ENCODE measurements at regions of chr1 and their contacts with region 1.

Region 1: DNA sequence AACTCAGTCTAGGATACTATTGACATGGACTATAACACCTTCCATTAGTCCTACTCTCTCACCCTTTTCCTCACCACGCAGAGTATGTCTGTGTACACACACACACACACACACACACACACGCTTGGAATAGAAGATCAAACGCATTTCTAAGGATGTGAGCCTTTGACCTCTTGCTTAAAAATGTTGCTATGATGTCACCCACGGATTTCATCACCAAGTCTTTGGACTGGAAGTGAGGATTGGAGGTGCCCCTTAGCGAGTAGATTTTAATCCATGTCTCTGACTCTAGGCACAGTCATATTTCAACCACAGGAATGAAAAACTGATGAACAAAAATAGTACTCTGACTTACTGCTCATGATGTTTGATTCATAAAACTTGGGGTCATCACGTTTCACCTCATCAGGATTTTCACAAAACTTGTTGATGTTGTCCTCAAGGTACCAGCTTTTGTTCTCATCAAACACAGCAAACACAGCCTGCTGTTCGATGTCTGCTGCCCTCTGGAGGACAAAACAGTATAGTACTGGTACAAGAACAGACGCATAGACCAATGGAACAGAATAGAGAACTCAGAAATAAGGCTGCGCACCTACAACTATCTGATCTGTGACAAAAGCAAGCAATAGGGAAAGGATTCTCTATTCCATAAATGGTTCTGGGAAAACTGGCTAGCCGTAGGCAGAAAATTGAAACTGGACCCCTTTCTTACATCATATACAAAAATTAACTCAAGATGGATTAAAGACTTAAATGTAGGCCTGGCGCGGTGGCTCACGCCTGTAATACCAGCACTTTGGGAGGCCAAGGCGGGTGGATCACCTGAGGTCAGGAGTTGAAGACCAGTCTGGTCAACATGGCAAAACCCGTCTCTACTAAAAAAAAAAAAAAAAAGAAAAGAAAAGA is 39.9 kb downstream of the F5 start:
- DNase-seq: peak; percentile 34 to 38
- ATAC-seq: peak; percentile 84 to 94
- H3K4me3 ChIP-seq: no peak overlapping the region
- H3K27ac ChIP-seq: no peak overlapping the region
- H3K4me1 ChIP-seq: no peaks in the 10 kb centered on the region
- H3K27me3 ChIP-seq: no peaks in the 10 kb centered on the region
- CTCF ChIP-seq: peak; percentile 77 to 85 (median 80)
- POLR2A ChIP-seq: no peak

Region 2: GRCh38 chr1:168342572-168343280 is 1203.6 kb before region 1 on chr1:
- in situ Hi-C with region 1: loop called in 1 of 4 experiments (anchors 25 kb)
- intact Hi-C with region 1: loop called (anchors 10 kb)
- DNase-seq: peak; percentile 64 to 77
- ATAC-seq: peak; percentile 96 to 98
- H3K4me3 ChIP-seq: peak overlapping the region; percentile 2 to 52 (median 14)
- H3K27ac ChIP-seq: no peak overlapping the region
- H3K4me1 ChIP-seq: peaks cover 0 to 6% of the 10 kb centered on the region in 2 donors
- H3K27me3 ChIP-seq: no peaks in the 10 kb centered on the region
- CTCF ChIP-seq: peak; percentile 58 to 83 (median 79)
- POLR2A ChIP-seq: no peak

Region 3: DNA sequence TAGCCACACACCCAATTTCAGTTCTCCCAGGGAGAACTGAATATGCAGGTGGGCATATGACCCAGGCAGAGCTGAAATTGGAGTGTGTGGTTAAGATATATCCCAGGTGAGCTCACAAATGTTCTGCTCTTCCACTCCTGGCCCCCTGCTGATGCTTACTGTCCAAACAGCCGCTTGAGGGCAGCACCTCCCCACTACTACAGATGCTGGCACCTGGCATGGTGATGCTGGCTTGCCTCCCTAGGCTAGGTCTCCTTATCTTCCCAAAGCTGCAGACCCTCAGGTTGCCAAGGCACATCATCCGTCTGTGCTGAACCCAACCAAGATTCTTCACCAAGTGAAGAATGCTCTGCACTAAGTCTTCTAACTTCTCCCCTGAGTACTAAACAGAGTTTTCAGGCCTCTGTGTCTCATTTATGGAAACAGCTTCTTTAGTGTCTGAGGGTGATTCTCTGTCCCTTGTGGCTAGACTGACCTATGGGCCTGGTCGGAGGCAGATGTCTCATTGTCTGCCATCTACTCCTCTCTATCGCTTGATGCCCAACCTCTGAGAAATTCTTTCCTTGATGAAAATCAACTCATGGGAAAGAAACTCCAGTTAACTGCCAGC is 942.7 kb before region 1 on chr1:
- in situ Hi-C with region 1: loop called in 1 of 4 experiments (anchors 10 kb)
- intact Hi-C with region 1: no loop called
- DNase-seq: peak; percentile 68 to 79
- ATAC-seq: peak; percentile 53 to 69
- H3K4me3 ChIP-seq: no peak overlapping the region
- H3K27ac ChIP-seq: peak overlapping the region; percentile 17 to 100 (median 56)
- H3K4me1 ChIP-seq: peaks cover 28 to 32% of the 10 kb centered on the region in 2 donors
- H3K27me3 ChIP-seq: no peaks in the 10 kb centered on the region
- CTCF ChIP-seq: peak; percentile 86 to 93 (median 87)
- POLR2A ChIP-seq: no peak

Region 4: GRCh38 chr1:169390303-169390702 is 156.0 kb before region 1 on chr1:
- in situ Hi-C with region 1: loop called in 1 of 4 experiments (anchors 25 kb)
- intact Hi-C with region 1: no loop called
- DNase-seq: no peak
- ATAC-seq: no peak
- H3K4me3 ChIP-seq: no peak overlapping the region
- H3K27ac ChIP-seq: no peak overlapping the region
- H3K4me1 ChIP-seq: no peaks in the 10 kb centered on the region
- H3K27me3 ChIP-seq: no peaks in the 10 kb centered on the region
- CTCF ChIP-seq: no peak
- POLR2A ChIP-seq: no peak

Region 5: GRCh38 chr1:169711469-169712281 is 165.3 kb after region 1 on chr1 and contains the start of gene SELL:
- in situ Hi-C with region 1: no loop called
- intact Hi-C with region 1: loop called (anchors 5 kb)
- DNase-seq: peak; percentile 21 to 23
- ATAC-seq: peak; percentile 70 to 83
- H3K4me3 ChIP-seq: peak within 1 kb of the TSS in 3 of 4 donors; percentile 22 to 49 (median 30)
- H3K27ac ChIP-seq: no peak within 1 kb of the TSS
- H3K4me1 ChIP-seq: no peaks in the 10 kb centered on the region
- H3K27me3 ChIP-seq: no peaks in the 10 kb centered on the region
- CTCF ChIP-seq: peak; percentile 18 to 68 (median 64)
- POLR2A ChIP-seq: no peak
- total RNA-seq, gene SELL: 0.24 to 0.72 (median 0.55) TPM in 3 of 4 donors, not detected in the other